Mammary epithelial cell (primary cell): ENCODE measurements at regions of chr22 and their contacts with region 1.

Region 1: DNA sequence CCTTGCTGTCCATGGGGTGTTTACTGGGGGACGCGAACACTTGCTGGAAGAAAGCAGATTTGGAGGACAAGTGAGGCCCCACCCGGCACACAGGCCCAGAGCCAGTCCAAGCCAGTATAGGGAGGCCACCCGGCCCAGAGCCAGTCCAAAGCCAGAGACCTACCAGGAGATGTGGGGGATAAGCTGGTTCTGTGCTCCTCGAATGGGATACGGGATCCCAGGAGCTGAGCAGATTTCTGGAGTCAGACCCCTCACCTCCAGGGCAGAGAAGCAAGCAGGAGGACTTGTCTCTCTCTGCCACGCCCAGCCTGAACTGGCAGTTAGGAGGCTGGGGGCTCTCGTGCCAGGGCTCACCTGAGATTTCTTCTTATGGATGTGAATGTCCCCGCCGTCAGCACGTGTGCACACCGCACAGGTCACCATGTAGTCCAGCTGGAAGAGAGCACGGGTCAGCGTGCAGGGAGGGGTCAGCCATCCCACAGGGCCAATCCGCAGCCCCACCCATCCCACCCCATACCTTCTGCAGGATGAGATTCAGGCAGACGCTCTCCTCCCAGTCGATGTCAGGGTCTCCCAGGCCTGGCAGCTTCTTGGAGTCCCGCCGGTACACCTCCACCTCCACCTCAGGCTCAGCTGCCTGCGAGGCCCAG is 35.3 kb downstream of the KIAA0930 start:
- DNase-seq: no peak
- H3K4me3 ChIP-seq: no peak overlapping the region
- H3K27ac ChIP-seq: no peak overlapping the region
- H3K4me1 ChIP-seq: peaks cover 12% of the 10 kb centered on the region
- H3K27me3 ChIP-seq: no peaks in the 10 kb centered on the region
- CTCF ChIP-seq: no peak

Region 2: GRCh38 chr22:45036154-45036553 is 169.2 kb before region 1 on chr22:
- CTCF ChIA-PET with region 1: no interaction called
- dilution Hi-C with region 1: no loop called
- in situ Hi-C with region 1: no loop called
- intact Hi-C with region 1: no loop called
- DNase-seq: no peak
- H3K4me3 ChIP-seq: no peak overlapping the region
- H3K27ac ChIP-seq: no peak overlapping the region
- H3K4me1 ChIP-seq: no peaks in the 10 kb centered on the region
- H3K27me3 ChIP-seq: peaks cover 10% of the 10 kb centered on the region
- CTCF ChIP-seq: no peak

Region 3: DNA sequence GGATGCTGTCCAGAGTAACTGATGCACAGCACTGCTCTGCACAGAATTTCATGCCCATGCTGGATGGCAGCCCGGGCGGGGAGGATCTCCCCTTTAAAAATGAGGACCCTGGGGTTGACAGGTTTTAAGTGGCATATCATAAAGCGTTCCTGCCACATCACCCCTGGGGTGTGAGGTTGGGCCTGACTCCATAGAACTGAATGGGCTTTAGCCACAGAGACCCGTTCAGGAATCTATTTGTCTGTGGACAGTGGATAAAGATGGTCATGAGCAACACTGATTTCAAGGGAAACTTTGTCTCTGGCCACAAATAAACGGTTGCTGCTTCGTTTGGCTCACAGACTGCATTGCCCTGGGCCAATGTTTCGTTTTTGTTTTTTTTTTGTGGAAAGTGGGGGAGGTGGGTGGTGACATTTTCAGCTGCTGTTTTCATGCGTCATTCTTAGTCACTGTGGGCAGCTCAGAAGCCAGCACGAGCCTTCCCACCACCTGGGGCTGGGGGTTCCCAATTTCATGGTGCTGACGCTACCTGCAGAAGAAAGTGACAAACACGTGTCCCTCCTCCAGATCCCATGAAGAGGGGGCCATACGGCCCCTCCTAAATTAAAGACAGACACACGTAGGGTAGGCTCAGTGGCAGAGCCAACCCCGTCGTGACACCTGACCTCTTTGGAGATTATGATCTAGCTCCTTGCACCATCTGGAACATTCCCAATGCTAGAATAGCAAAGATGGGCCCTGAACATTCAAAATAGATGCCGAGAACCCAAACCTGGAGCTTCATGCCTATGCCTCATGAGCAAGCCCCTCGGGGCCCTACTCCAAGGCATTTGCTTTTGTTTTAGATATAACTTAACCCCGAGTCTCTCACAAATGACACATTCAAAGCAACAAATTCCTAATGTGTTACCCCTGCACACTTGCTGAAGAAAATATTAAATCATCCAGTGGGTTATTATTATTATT is 140.8 kb before region 1 on chr22:
- CTCF ChIA-PET with region 1: interaction called, 29 read pairs
- dilution Hi-C with region 1: no loop called
- in situ Hi-C with region 1: no loop called
- intact Hi-C with region 1: no loop called
- DNase-seq: peak; percentile 92
- H3K4me3 ChIP-seq: no peak overlapping the region
- H3K27ac ChIP-seq: no peak overlapping the region
- H3K4me1 ChIP-seq: peaks cover 11% of the 10 kb centered on the region
- H3K27me3 ChIP-seq: peaks cover 3% of the 10 kb centered on the region
- CTCF ChIP-seq: no peak

Region 4: GRCh38 chr22:45169576-45170466 is 35.6 kb before region 1 on chr22:
- CTCF ChIA-PET with region 1: no interaction called
- dilution Hi-C with region 1: no loop called
- in situ Hi-C with region 1: no loop called
- intact Hi-C with region 1: no loop called
- DNase-seq: peak; percentile 13
- H3K4me3 ChIP-seq: no peak overlapping the region
- H3K27ac ChIP-seq: no peak overlapping the region
- H3K4me1 ChIP-seq: peaks cover 15% of the 10 kb centered on the region
- H3K27me3 ChIP-seq: no peaks in the 10 kb centered on the region
- CTCF ChIP-seq: no peak

Region 5: DNA sequence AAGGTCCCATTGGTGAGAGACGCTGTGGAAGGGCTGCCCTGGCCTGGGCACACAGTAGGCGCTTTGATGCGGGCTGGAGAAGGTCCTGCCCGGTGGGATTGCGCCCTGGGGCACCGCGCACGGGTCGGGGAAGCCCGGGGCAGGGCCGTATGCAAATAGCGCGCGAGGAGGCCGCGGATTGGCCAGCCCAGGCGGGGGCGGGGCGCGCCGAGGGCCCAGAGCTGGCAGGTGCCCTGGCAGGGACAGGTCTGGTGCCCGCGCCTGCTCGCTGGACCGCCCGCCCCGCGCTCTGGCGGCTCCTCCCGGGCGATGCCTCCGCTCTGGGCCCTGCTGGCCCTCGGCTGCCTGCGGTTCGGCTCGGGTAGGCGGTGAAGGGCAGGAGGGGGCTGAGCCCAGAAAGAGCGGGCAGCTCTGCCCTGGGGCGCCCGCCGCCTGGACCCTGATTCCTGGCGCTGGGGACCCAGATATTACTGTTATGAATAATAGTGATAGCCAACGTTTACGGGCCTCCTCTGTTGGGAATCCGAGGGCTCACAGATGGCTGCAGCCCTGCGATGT is 79.4 kb after region 1 on chr22 and contains the start of gene UPK3A:
- CTCF ChIA-PET with region 1: no interaction called
- dilution Hi-C with region 1: no loop called
- in situ Hi-C with region 1: no loop called
- intact Hi-C with region 1: no loop called
- DNase-seq: peak; percentile 32
- H3K4me3 ChIP-seq: no peak within 1 kb of the TSS
- H3K27ac ChIP-seq: no peak within 1 kb of the TSS
- H3K4me1 ChIP-seq: peaks cover 4% of the 10 kb centered on the region
- H3K27me3 ChIP-seq: peaks cover 6% of the 10 kb centered on the region
- CTCF ChIP-seq: no peak
- total RNA-seq, gene UPK3A: not detected